Right ventricle myocardium inferior (tissue), 1 donor: ENCODE measurements at regions of chrX and their contacts with region 1.

Region 1: DNA sequence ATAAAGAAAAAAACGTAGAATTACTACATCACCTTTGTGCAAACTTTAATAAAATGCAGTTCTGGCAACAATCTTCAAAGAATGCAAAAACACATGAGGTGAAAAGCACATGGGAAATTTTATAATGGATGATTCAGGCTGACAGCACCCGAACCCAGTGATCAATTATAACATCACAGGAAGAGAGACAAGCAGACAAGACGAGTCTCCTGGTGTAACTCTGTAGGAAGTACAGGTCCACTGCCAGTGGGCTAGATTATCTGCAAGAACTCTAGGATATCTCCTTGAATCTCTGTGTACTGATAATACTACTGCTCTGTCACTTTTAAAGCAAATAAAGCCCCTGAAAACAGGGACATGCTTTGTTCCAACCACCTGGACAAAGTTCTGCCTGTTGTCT is 58.9 kb upstream of the NXF3 start:
- DNase-seq: no peak
- ATAC-seq: no peak

Region 2: GRCh38 chrX:102498732-102499131 is 653.1 kb before region 1 on chrX:
- intact Hi-C with region 1: no loop called
- DNase-seq: no peak
- ATAC-seq: no peak

Region 3: DNA sequence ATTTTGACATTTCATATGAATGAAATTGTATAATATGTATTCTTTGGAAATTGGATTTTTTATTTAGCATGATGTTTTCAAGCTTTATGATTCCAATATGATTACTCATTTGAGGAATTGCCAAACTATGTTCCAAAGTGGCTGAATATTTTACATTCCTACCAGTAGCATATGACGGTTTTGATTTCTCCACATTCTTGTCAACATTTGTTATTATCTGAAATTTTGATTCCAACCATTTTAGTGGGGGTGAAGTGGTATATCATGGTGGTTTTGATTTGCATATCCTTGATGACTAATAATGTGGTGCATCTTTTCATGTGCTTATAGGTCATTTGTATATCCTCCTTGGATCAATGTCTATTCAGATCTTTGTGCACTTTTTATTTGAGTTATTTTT is 85.2 kb before region 1 on chrX:
- intact Hi-C with region 1: no loop called
- DNase-seq: no peak
- ATAC-seq: no peak

Region 4: DNA sequence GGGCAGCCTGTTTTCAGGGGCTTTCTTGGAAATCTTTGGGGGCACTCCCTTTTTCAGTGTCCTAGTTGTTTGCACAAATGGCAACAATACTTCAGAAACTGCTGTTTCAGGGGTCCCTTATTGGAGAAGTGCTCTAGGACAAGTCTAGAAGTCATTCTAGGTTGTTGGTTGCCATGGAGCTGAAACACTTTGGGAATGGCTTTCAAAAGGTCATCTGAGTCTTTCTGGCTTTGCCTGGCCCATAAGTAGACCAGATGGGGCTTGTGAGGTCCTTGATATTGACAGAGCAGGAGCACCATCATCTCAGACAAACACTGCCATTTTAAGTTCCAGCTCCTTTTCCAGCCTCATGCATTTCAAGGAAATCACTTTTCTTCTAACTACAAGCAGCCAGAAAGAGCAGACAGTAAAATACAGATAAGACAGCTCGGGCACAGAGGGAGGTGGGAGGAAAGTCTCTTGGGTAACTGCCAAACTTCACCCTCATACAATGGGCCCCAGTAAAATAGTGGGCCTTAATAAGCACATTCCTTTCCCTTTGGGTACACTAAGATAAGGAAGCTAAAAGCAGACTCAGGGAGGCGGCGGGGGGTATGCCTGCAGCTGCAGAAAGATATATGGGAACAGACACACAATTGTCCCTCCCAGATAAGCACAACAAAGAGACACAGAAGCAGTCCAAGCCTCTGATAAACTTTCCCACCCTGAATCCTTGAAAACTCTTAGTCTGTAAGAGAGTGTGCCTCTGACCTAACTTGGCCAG is 50.3 kb before region 1 on chrX:
- intact Hi-C with region 1: loop called (anchors 5 kb)
- DNase-seq: no peak
- ATAC-seq: no peak